Esophagus muscularis mucosa (tissue), 4 donors: ENCODE measurements at regions of chr2 and their contacts with region 1.

Region 1: GRCh38 chr2:174682578-174683391 is 81.5 kb downstream of the CHRNA1 start:
- DNase-seq: no peak
- H3K4me3 ChIP-seq: peak overlapping the region; percentile 75 to 98 (median 88)
- H3K27ac ChIP-seq: peak overlapping the region; percentile 84 to 89 (median 86)
- H3K4me1 ChIP-seq: peaks cover 28 to 50% (median 42%) of the 10 kb centered on the region in 4 donors
- H3K27me3 ChIP-seq: no peaks in the 10 kb centered on the region
- CTCF ChIP-seq: no peak
- EP300 ChIP-seq: no peak
- POLR2A ChIP-seq: no peak

Region 2: GRCh38 chr2:174477759-174478158 is 205.0 kb before region 1 on chr2:
- intact Hi-C with region 1: loop called (anchors 5 kb)
- DNase-seq: no peak
- H3K4me3 ChIP-seq: no peak overlapping the region
- H3K27ac ChIP-seq: no peak overlapping the region
- H3K4me1 ChIP-seq: no peaks in the 10 kb centered on the region
- H3K27me3 ChIP-seq: no peaks in the 10 kb centered on the region
- CTCF ChIP-seq: no peak
- EP300 ChIP-seq: no peak
- POLR2A ChIP-seq: no peak

Region 3: GRCh38 chr2:174606336-174606735 is 76.4 kb before region 1 on chr2:
- intact Hi-C with region 1: loop called (anchors 5 kb)
- DNase-seq: no peak
- H3K4me3 ChIP-seq: no peak overlapping the region
- H3K27ac ChIP-seq: peak overlapping the region; percentile 48 to 68 (median 56)
- H3K4me1 ChIP-seq: peaks cover 31 to 74% (median 67%) of the 10 kb centered on the region in 4 donors
- H3K27me3 ChIP-seq: no peaks in the 10 kb centered on the region
- CTCF ChIP-seq: no peak
- EP300 ChIP-seq: no peak
- POLR2A ChIP-seq: no peak